Caco-2 (cell line): ENCODE measurements at regions of chr20 and their contacts with region 1.

Region 1: GRCh38 chr20:2206957-2207769 is 88.6 kb upstream of the TGM3 start:
- DNase-seq: peak; percentile 79 to 88
- H3K4me3 ChIP-seq: peak overlapping the region; percentile 56
- H3K4me3 Mint-ChIP-seq: peak overlapping the region; percentile 78
- H3K27ac Mint-ChIP-seq: peak overlapping the region; percentile 19
- H3K4me1 ChIP-seq: no peaks in the 10 kb centered on the region; the same call in 1 of the 2 replicates
- H3K4me1 Mint-ChIP-seq: no peaks in the 10 kb centered on the region
- H3K27me3 ChIP-seq: no peaks in the 10 kb centered on the region; the same call in 1 of the 2 replicates
- H3K27me3 Mint-ChIP-seq: peaks cover 21% of the 10 kb centered on the region
- CTCF ChIP-seq: peak; percentile 75 to 76

Region 2: GRCh38 chr20:2244993-2245392 is 37.8 kb after region 1 on chr20:
- CTCF ChIA-PET with region 1: interaction called, 17 read pairs
- POLR2A ChIA-PET with region 1: no interaction called
- intact Hi-C with region 1: no loop called
- DNase-seq: peak in 1 of 2 experiments; percentile 12
- H3K4me3 ChIP-seq: no peak overlapping the region
- H3K4me3 Mint-ChIP-seq: no peak overlapping the region
- H3K27ac Mint-ChIP-seq: no peak overlapping the region
- H3K4me1 ChIP-seq: no peaks in the 10 kb centered on the region
- H3K4me1 Mint-ChIP-seq: no peaks in the 10 kb centered on the region
- H3K27me3 ChIP-seq: no peaks in the 10 kb centered on the region
- H3K27me3 Mint-ChIP-seq: peaks cover 13% of the 10 kb centered on the region
- CTCF ChIP-seq: peak in 1 of 2 experiments; percentile 21

Region 3: DNA sequence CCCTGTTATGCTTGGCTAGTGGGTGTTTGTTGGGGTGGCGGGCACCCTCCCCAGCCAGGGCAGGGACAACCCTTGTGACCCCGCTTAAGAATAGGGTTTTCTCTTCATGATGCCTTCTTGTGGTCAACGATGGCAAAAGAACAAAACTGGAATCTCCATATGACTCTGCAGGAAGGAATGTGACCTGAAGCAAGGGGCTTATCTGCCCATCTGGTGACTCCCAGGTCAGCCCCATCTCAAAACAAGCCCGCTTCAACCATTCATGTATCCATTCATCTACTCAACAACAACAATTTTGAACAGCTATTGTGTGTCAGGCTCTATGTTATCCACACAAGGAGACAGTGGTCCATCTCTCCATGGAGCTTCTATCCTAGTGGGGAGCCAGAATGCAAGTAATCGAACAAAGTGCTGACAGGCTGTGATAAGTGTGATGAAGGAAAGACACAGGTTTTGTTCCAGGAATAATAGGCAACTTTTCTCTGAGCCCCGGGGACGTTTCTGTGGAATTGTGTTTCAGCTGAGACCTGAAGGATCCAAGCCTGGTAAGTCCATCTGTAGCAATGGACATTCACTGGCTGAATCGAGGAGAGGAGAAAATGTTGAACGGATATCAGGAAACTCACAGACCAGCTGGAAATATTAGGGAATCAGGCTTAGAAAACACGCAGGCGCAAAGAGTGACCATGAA is 142.8 kb after region 1 on chr20:
- CTCF ChIA-PET with region 1: no interaction called
- POLR2A ChIA-PET with region 1: no interaction called
- intact Hi-C with region 1: loop called (anchors 2 kb)
- DNase-seq: no peak
- H3K4me3 ChIP-seq: no peak overlapping the region
- H3K4me3 Mint-ChIP-seq: no peak overlapping the region
- H3K27ac Mint-ChIP-seq: no peak overlapping the region
- H3K4me1 ChIP-seq: 0 out of 2 replicates have a peak, but pooled peaks cover 4% of the 10 kb centered on the region
- H3K4me1 Mint-ChIP-seq: no peaks in the 10 kb centered on the region
- H3K27me3 ChIP-seq: no peaks in the 10 kb centered on the region; the same call in 1 of the 2 replicates
- H3K27me3 Mint-ChIP-seq: peaks cover 6% of the 10 kb centered on the region
- CTCF ChIP-seq: no peak

Region 4: DNA sequence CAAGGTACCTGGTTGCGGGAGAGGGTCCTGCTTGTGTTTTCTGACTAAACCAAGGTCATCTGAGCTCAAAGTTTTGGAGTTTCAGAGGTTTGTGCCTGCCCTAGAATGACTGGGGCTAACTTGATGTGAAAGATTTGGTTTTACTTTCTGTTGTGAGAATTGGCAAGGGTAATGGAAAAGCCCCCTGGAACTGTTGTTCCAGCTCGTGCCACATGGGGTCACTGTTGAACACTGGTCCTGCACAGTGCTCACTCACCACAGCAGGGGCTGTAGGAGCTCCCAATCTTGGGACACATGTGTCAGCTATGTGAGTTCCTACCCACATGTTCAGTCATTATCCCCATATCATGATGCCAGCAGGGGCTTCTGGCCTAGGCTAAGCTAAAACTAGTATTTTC is 180.0 kb after region 1 on chr20:
- CTCF ChIA-PET with region 1: interaction called, 15 read pairs
- POLR2A ChIA-PET with region 1: no interaction called
- intact Hi-C with region 1: no loop called
- DNase-seq: peak; percentile 57 to 67
- H3K4me3 ChIP-seq: no peak overlapping the region
- H3K4me3 Mint-ChIP-seq: no peak overlapping the region
- H3K27ac Mint-ChIP-seq: no peak overlapping the region
- H3K4me1 ChIP-seq: no peaks in the 10 kb centered on the region
- H3K4me1 Mint-ChIP-seq: no peaks in the 10 kb centered on the region
- H3K27me3 ChIP-seq: no peaks in the 10 kb centered on the region; the same call in none of the 2 replicates
- H3K27me3 Mint-ChIP-seq: peaks cover 7% of the 10 kb centered on the region
- CTCF ChIP-seq: peak; percentile 61 to 75

Region 5: GRCh38 chr20:2402271-2402980 is 195.3 kb after region 1 on chr20:
- CTCF ChIA-PET with region 1: interaction called, 4 read pairs
- POLR2A ChIA-PET with region 1: no interaction called
- intact Hi-C with region 1: loop called (anchors 5 kb)
- DNase-seq: peak in 1 of 2 experiments; percentile 26
- H3K4me3 ChIP-seq: no peak overlapping the region
- H3K4me3 Mint-ChIP-seq: no peak overlapping the region
- H3K27ac Mint-ChIP-seq: no peak overlapping the region
- H3K4me1 ChIP-seq: no peaks in the 10 kb centered on the region
- H3K4me1 Mint-ChIP-seq: no peaks in the 10 kb centered on the region
- H3K27me3 ChIP-seq: no peaks in the 10 kb centered on the region
- H3K27me3 Mint-ChIP-seq: no peaks in the 10 kb centered on the region
- CTCF ChIP-seq: peak; percentile 24 to 34

Region 6: DNA sequence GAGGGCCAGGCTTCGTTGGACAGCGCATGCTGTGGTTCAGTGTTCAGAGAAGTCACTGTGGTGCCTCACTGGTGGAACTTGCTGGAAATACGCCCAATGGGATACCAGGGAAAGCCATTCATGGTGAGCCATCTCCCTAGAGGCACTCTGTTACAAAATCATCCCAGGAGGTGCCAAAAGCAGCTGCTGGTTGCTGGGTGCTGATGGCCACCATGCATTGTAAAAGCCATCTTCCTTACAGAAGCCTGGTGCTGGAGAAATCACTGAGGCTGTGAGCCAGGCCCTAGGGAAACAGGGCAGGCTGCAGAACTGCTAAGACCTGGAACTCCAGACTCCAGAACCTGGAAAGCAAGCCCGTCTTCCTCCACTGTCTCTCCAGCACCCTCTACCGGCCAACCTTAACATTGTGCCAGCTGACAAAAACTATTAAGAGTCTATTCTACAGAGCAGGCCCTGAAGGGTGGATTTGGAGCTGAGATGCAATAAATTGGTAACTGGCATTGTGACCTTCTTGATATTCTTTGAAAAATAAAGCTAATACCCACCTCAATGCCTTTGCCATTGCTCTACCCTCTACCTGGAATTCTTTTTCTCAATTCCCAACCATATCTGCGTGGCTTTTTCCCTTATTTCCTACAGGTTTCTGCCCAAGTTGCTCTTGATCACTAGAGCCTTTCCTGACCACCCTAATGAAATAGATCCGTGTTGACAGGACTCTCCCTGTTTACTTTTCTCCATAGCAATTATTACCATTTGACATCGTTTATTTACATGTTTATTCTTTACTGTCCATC is 245.0 kb after region 1 on chr20:
- CTCF ChIA-PET with region 1: interaction called, 33 read pairs
- POLR2A ChIA-PET with region 1: no interaction called
- intact Hi-C with region 1: loop called (anchors 1 kb)
- DNase-seq: peak; percentile 81 to 87
- H3K4me3 ChIP-seq: no peak overlapping the region
- H3K4me3 Mint-ChIP-seq: no peak overlapping the region
- H3K27ac Mint-ChIP-seq: no peak overlapping the region
- H3K4me1 ChIP-seq: no peaks in the 10 kb centered on the region
- H3K4me1 Mint-ChIP-seq: no peaks in the 10 kb centered on the region
- H3K27me3 ChIP-seq: no peaks in the 10 kb centered on the region
- H3K27me3 Mint-ChIP-seq: peaks cover 8% of the 10 kb centered on the region
- CTCF ChIP-seq: peak; percentile 87 to 89

Region 7: GRCh38 chr20:2463616-2464365 is 256.6 kb after region 1 on chr20:
- CTCF ChIA-PET with region 1: no interaction called
- POLR2A ChIA-PET with region 1: no interaction called
- intact Hi-C with region 1: no loop called
- DNase-seq: peak in 1 of 2 experiments; percentile 17
- H3K4me3 ChIP-seq: no peak overlapping the region
- H3K4me3 Mint-ChIP-seq: no peak overlapping the region
- H3K27ac Mint-ChIP-seq: no peak overlapping the region
- H3K4me1 ChIP-seq: peaks cover 10% of the 10 kb centered on the region
- H3K4me1 Mint-ChIP-seq: peaks cover 8% of the 10 kb centered on the region
- H3K27me3 ChIP-seq: no peaks in the 10 kb centered on the region
- H3K27me3 Mint-ChIP-seq: no peaks in the 10 kb centered on the region
- CTCF ChIP-seq: no peak